ENCODE measurements at regions of chr6 and their contacts with region 1.

Region 1: DNA sequence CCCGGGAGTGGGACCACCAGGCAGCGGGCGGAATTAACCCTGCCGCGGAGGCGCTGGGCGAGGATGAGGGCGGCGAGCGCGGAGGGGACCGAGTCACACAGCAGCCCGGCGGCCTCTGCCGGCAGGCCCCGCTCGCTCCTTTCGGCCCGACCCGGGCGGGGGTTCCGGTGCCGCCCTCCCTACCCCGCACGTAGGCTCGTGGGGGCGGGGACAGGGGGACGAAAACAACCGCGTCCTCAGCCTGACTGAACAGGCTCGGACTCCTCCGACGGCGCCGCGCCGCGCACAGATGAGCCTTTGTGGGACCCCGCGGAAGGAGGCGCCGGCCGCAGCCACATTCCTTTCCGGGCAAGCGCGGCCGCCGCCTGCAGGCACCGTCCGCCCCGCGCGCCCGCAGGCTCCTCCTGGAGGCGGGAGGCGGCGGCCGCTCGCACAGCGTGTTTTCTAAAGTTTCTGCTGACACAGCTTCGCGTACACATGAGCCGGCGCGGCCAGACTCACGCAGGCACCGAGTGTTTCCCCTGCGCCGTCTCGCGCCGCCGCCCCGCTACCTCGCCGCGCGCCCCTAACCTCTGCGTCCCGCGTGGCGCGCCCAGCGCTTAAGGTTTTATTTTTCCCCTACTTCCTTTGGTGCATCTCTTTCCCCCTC is 244.3 kb downstream of the ARID1B start:
- DNase-seq: peak; percentile 90
- H3K4me3 Mint-ChIP-seq: peak overlapping the region; percentile 92
- H3K27ac Mint-ChIP-seq: peak overlapping the region; percentile 99
- H3K4me1 Mint-ChIP-seq: peaks cover 64% of the 10 kb centered on the region
- H3K27me3 Mint-ChIP-seq: no peaks in the 10 kb centered on the region

Region 2: GRCh38 chr6:156564127-156564806 is 457.2 kb before region 1 on chr6:
- CTCF ChIA-PET with region 1: no interaction called
- intact Hi-C with region 1: loop called (anchors 1 kb)
- DNase-seq: peak; percentile 86
- H3K4me3 Mint-ChIP-seq: no peak overlapping the region
- H3K27ac Mint-ChIP-seq: no peak overlapping the region
- H3K4me1 Mint-ChIP-seq: peaks cover 5% of the 10 kb centered on the region
- H3K27me3 Mint-ChIP-seq: peaks cover 2% of the 10 kb centered on the region

Region 3: DNA sequence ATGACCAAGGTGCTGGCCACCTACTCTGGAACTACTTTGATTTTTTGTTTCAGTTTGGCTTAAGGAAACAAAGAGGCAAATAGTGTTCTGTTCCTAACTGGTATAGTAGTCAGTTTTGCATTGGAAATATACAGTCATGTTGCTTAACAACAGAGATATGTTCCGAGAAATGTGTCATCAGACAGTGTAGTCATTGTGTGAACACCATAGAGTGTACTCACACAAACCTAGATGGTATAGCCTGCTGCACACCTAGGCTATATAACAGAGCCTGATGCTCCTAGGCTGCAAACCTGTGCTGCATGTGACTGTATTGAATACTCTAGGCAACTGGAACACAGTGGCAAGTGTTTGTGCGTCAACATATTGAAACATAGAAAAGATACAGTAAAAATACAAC is 163.9 kb before region 1 on chr6:
- CTCF ChIA-PET with region 1: interaction called, 9 read pairs
- intact Hi-C with region 1: loop called (anchors 1 kb)
- DNase-seq: peak; percentile 57
- H3K4me3 Mint-ChIP-seq: no peak overlapping the region
- H3K27ac Mint-ChIP-seq: peak overlapping the region; percentile 89
- H3K4me1 Mint-ChIP-seq: peaks cover 77% of the 10 kb centered on the region
- H3K27me3 Mint-ChIP-seq: no peaks in the 10 kb centered on the region

Region 4: GRCh38 chr6:157034436-157035230 is 13.2 kb after region 1 on chr6:
- CTCF ChIA-PET with region 1: interaction called, 4 read pairs
- intact Hi-C with region 1: loop called (anchors 1 kb)
- DNase-seq: no peak
- H3K4me3 Mint-ChIP-seq: peak overlapping the region; percentile 41
- H3K27ac Mint-ChIP-seq: peak overlapping the region; percentile 63
- H3K4me1 Mint-ChIP-seq: peaks cover 26% of the 10 kb centered on the region
- H3K27me3 Mint-ChIP-seq: no peaks in the 10 kb centered on the region

Region 5: GRCh38 chr6:157107915-157108651 is 86.6 kb after region 1 on chr6:
- CTCF ChIA-PET with region 1: no interaction called
- intact Hi-C with region 1: no loop called
- DNase-seq: peak; percentile 27
- H3K4me3 Mint-ChIP-seq: no peak overlapping the region
- H3K27ac Mint-ChIP-seq: peak overlapping the region; percentile 2
- H3K4me1 Mint-ChIP-seq: peaks cover 38% of the 10 kb centered on the region
- H3K27me3 Mint-ChIP-seq: no peaks in the 10 kb centered on the region

Region 6: GRCh38 chr6:157274471-157275226 is 253.2 kb after region 1 on chr6:
- CTCF ChIA-PET with region 1: no interaction called
- intact Hi-C with region 1: loop called (anchors 1 kb)
- DNase-seq: peak; percentile 86
- H3K4me3 Mint-ChIP-seq: peak overlapping the region; percentile 80
- H3K27ac Mint-ChIP-seq: peak overlapping the region; percentile 75
- H3K4me1 Mint-ChIP-seq: peaks cover 5% of the 10 kb centered on the region
- H3K27me3 Mint-ChIP-seq: no peaks in the 10 kb centered on the region